Prostate gland (tissue), 2 donors: ENCODE measurements at regions of chr14 and their contacts with region 1.

Region 1: GRCh38 chr14:20970983-20971704 is 15.9 kb downstream of the RNASE2 start:
- DNase-seq: peak; percentile 83
- H3K4me3 ChIP-seq: peak overlapping the region; percentile 32 to 49
- H3K27ac ChIP-seq: peak overlapping the region; percentile 40 to 60
- H3K4me1 ChIP-seq: no peaks in the 10 kb centered on the region
- H3K27me3 ChIP-seq: no peaks in the 10 kb centered on the region
- CTCF ChIP-seq: peak; percentile 46 to 95 (median 84)
- POLR2A ChIP-seq: no peak

Region 2: GRCh38 chr14:20461274-20462001 is 509.7 kb before region 1 on chr14 and contains the start of gene PIP4P1:
- intact Hi-C with region 1: loop called (anchors 10 kb)
- DNase-seq: peak; percentile 100
- H3K4me3 ChIP-seq: peak within 1 kb of the TSS; percentile 97 to 98
- H3K27ac ChIP-seq: peak within 1 kb of the TSS; percentile 98 to 99
- H3K4me1 ChIP-seq: peaks cover 2% of the 10 kb centered on the region
- H3K27me3 ChIP-seq: no peaks in the 10 kb centered on the region
- CTCF ChIP-seq: peak in 1 of 4 experiments; percentile 35
- POLR2A ChIP-seq: peak; percentile 83
- total RNA-seq, gene PIP4P1: 24.8 to 37.8 TPM

Region 3: GRCh38 chr14:20697273-20698017 is 273.7 kb before region 1 on chr14:
- intact Hi-C with region 1: loop called (anchors 5 kb)
- DNase-seq: peak; percentile 42
- H3K4me3 ChIP-seq: no peak overlapping the region
- H3K27ac ChIP-seq: no peak overlapping the region
- H3K4me1 ChIP-seq: no peaks in the 10 kb centered on the region
- H3K27me3 ChIP-seq: no peaks in the 10 kb centered on the region
- CTCF ChIP-seq: peak; percentile 42 to 84 (median 62)
- POLR2A ChIP-seq: no peak